HCT116 (cell line): ENCODE measurements at regions of chr17 and their contacts with region 1.

Region 1: DNA sequence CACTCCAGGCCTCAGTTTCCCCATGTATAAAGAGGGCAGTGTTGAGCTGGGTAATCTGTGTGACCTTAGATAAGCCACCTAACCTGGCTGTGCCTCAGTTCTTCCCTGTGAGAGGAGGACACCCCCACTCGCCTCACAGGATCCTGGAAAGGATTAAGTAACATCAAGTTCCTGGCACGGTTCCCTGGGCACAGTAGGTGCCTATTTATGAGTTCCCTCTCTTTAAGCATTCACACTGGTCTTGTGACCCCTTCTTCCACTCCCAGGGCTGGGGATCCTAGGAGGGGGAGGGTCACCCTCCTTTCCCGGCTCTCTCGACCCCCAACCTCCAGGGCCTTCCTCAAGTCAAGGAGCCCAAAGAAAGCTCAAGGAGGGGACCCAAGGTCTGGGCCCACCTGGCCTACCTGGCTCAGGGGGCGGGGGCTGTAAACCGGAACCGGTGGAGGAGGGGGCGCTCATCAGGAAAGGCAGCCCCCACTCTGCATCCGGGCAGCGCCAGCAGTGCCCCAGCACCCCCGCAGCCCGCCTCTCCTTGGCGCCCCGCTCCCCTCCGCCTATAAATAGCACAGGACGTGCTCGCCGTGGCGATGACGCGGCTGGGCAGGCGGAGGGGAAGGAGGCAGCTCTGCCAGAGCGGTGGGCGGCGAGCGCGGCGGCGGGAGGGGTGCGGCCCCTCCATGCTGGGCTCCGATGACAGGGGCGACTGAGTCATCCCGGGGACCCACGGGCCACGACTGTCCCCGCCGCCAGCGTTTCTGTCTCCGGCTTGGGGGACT is 9.4 kb downstream of the RPL19 start:
- DNase-seq: no peak
- ATAC-seq: no peak
- H3K4me3 ChIP-seq: no peak overlapping the region
- H3K27ac ChIP-seq: no peak overlapping the region
- H3K4me1 ChIP-seq: peaks cover 20 to 39% of the 10 kb centered on the region in 2 experiments
- H3K27me3 ChIP-seq: no peaks in the 10 kb centered on the region
- CTCF ChIP-seq: no peak
- POLR2A ChIP-seq: no peak
- RAD21 ChIP-seq: no peak

Region 2: DNA sequence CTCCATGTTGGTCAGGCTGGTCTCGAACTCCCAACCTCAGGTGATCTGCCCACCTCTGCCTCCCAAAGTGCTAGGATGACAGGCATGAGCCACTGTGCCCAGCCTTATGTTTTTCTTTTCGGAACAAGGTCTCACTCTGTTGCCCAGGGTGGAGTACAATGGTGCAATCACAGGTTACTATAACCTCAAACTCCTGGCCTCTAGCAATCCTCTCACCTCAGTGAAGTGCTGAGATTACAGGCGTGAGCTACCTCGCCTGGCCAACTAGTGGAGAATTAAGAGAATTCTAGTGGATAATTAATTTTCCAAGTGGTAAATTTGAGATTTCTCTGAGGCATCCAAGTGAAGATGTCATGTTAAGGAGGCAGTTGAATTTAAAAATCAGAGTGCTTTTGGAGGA is 239.4 kb before region 1 on chr17:
- CTCF ChIA-PET with region 1: no interaction called
- POLR2A ChIA-PET with region 1: no interaction called
- RAD21 ChIA-PET with region 1: no interaction called
- intact Hi-C with region 1: no loop called
- DNase-seq: no peak
- ATAC-seq: peak; percentile 43; the same call in 1 of the 2 replicates
- H3K4me3 ChIP-seq: no peak overlapping the region
- H3K27ac ChIP-seq: no peak overlapping the region
- H3K4me1 ChIP-seq: peaks cover 11 to 12% of the 10 kb centered on the region in 2 experiments
- H3K27me3 ChIP-seq: no peaks in the 10 kb centered on the region
- CTCF ChIP-seq: peak in 2 of 3 experiments; percentile 18 to 31; a peak in 2 of 6 replicates
- POLR2A ChIP-seq: no peak
- RAD21 ChIP-seq: no peak

Region 3: GRCh38 chr17:39235555-39236449 is 26.3 kb after region 1 on chr17:
- CTCF ChIA-PET with region 1: interaction called, 60 read pairs
- POLR2A ChIA-PET with region 1: interaction called, 10 read pairs
- RAD21 ChIA-PET with region 1: interaction called, 5 to 10 read pairs
- intact Hi-C with region 1: loop called (anchors 1 kb)
- DNase-seq: peak; percentile 87
- ATAC-seq: peak; percentile 83
- H3K4me3 ChIP-seq: no peak overlapping the region; a peak in 1 of 4 replicates
- H3K27ac ChIP-seq: no peak overlapping the region
- H3K4me1 ChIP-seq: peaks cover 18 to 52% of the 10 kb centered on the region in 2 experiments
- H3K27me3 ChIP-seq: no peaks in the 10 kb centered on the region
- CTCF ChIP-seq: peak; percentile 98 to 99 (median 99)
- POLR2A ChIP-seq: no peak
- RAD21 ChIP-seq: peak; percentile 41; the same call in 1 of the 2 replicates

Region 4: GRCh38 chr17:39244600-39245570 is 35.4 kb after region 1 on chr17:
- CTCF ChIA-PET with region 1: interaction called, 105 read pairs
- POLR2A ChIA-PET with region 1: interaction called, 13 read pairs
- RAD21 ChIA-PET with region 1: interaction called, 18 to 20 read pairs
- intact Hi-C with region 1: loop called (anchors 1 kb)
- DNase-seq: peak; percentile 80
- ATAC-seq: peak; percentile 95
- H3K4me3 ChIP-seq: no peak overlapping the region
- H3K27ac ChIP-seq: no peak overlapping the region
- H3K4me1 ChIP-seq: peaks cover under 1 to 13% of the 10 kb centered on the region in 2 experiments; a peak in 3 of 4 replicates
- H3K27me3 ChIP-seq: no peaks in the 10 kb centered on the region
- CTCF ChIP-seq: peak; percentile 91 to 96 (median 95)
- POLR2A ChIP-seq: no peak
- RAD21 ChIP-seq: peak; percentile 95

Region 5: GRCh38 chr17:39547713-39548478 is 338.4 kb after region 1 on chr17:
- CTCF ChIA-PET with region 1: interaction called, 23 read pairs
- POLR2A ChIA-PET with region 1: interaction called, 4 read pairs
- RAD21 ChIA-PET with region 1: interaction called in 1 of 2 experiments, 7 read pairs
- intact Hi-C with region 1: no loop called
- DNase-seq: peak; percentile 13
- ATAC-seq: peak; percentile 92
- H3K4me3 ChIP-seq: no peak overlapping the region
- H3K27ac ChIP-seq: no peak overlapping the region
- H3K4me1 ChIP-seq: no peaks in the 10 kb centered on the region
- H3K27me3 ChIP-seq: no peaks in the 10 kb centered on the region
- CTCF ChIP-seq: peak; percentile 92 to 99 (median 98)
- POLR2A ChIP-seq: no peak
- RAD21 ChIP-seq: peak; percentile 83